ENCODE measurements at regions of chr3 and their contacts with region 1.

Region 1: DNA sequence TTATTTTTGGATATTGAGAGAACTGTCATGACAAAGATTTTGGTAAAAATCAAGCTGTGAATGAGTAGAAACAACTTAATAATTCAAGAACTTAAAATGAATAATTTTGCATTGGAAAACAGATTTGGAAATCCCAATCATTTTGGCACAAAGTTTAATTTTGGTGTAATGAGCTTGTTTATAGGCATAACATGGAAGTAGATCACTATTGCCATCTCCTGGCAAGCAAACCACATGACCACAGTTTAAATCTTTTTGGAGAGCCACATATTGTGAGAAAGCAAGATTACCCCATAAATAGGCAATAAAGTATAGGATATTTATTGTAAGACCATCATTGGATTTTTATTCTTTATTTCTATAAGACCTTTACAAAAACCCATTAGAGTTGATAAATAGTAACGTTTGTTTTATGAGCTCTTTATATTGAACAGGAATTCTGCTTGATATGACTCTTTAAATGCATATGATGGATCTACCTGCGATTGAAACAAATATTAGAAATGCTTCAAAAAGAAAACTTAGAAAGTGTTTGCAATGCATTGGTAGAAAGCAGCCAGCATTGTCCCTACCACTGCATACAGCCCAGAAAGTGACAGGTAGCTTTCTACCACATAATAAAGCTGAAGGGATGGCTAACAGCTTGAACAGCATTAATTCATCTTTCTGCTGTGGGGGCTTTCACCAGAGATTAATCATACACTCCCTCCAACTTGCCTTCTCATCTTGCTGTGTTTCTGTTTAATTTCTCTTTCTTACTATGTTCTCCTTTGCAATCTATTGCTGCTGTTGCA is 766.8 kb downstream of the TBL1XR1 start:
- DNase-seq: peak; percentile 24
- H3K4me3 Mint-ChIP-seq: no peak overlapping the region
- H3K27ac Mint-ChIP-seq: no peak overlapping the region
- H3K4me1 Mint-ChIP-seq: peaks cover 10% of the 10 kb centered on the region
- H3K27me3 Mint-ChIP-seq: no peaks in the 10 kb centered on the region
- CTCF ChIP-seq: peak; percentile 60

Region 2: GRCh38 chr3:174639961-174640360 is 1790.5 kb before region 1 on chr3:
- CTCF ChIA-PET with region 1: interaction called, 3 read pairs
- intact Hi-C with region 1: loop called (anchors 10 kb)
- DNase-seq: no peak
- H3K4me3 Mint-ChIP-seq: no peak overlapping the region
- H3K27ac Mint-ChIP-seq: no peak overlapping the region
- H3K4me1 Mint-ChIP-seq: no peaks in the 10 kb centered on the region
- H3K27me3 Mint-ChIP-seq: no peaks in the 10 kb centered on the region
- CTCF ChIP-seq: no peak

Region 3: GRCh38 chr3:174775587-174775986 is 1654.9 kb before region 1 on chr3:
- CTCF ChIA-PET with region 1: no interaction called
- intact Hi-C with region 1: loop called (anchors 2 kb)
- DNase-seq: peak; percentile 26
- H3K4me3 Mint-ChIP-seq: no peak overlapping the region
- H3K27ac Mint-ChIP-seq: no peak overlapping the region
- H3K4me1 Mint-ChIP-seq: peaks cover 21% of the 10 kb centered on the region
- H3K27me3 Mint-ChIP-seq: no peaks in the 10 kb centered on the region
- CTCF ChIP-seq: no peak

Region 4: GRCh38 chr3:174973468-174973867 is 1457.0 kb before region 1 on chr3:
- CTCF ChIA-PET with region 1: no interaction called
- intact Hi-C with region 1: loop called (anchors 10 kb)
- DNase-seq: peak; percentile 82
- H3K4me3 Mint-ChIP-seq: no peak overlapping the region
- H3K27ac Mint-ChIP-seq: peak overlapping the region; percentile 81
- H3K4me1 Mint-ChIP-seq: peaks cover 25% of the 10 kb centered on the region
- H3K27me3 Mint-ChIP-seq: no peaks in the 10 kb centered on the region
- CTCF ChIP-seq: no peak

Region 5: DNA sequence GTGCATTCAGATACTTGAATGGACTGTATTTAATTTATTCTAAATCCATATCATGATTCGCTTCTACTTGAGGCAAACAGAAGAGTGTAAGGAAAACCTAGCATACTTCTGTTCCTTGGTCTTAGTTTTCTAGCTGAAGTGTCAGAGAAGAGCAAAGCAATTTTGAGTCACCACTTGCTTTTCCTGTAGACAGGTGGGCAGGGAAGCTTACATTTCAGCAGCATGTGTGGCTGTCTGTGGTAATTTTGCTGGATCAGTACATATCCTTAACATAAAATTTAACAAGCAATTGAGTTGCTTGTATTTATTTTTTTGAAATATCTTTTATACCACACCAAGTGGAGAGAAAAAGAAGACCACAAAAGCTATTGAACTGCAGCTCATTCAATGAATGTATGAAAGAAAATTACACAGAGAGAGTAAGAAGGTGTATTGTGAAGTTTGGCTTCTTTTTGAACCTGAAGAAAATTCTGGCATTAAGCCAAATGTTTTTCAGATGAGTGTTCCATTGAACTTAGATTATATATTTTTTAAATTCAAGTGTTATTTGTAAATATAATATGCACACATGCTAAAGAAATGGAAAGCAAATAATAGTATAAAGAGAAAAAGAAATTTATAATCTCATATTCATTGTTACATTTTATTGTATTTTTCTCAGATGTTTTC is 823.7 kb before region 1 on chr3:
- CTCF ChIA-PET with region 1: no interaction called
- intact Hi-C with region 1: loop called (anchors 10 kb)
- DNase-seq: no peak
- H3K4me3 Mint-ChIP-seq: no peak overlapping the region
- H3K27ac Mint-ChIP-seq: peak overlapping the region; percentile 87
- H3K4me1 Mint-ChIP-seq: peaks cover 69% of the 10 kb centered on the region
- H3K27me3 Mint-ChIP-seq: no peaks in the 10 kb centered on the region
- CTCF ChIP-seq: no peak

Region 6: GRCh38 chr3:175957002-175957401 is 473.4 kb before region 1 on chr3:
- CTCF ChIA-PET with region 1: interaction called, 6 read pairs
- intact Hi-C with region 1: loop called (anchors 1 kb)
- DNase-seq: peak; percentile 14
- H3K4me3 Mint-ChIP-seq: no peak overlapping the region
- H3K27ac Mint-ChIP-seq: no peak overlapping the region
- H3K4me1 Mint-ChIP-seq: no peaks in the 10 kb centered on the region
- H3K27me3 Mint-ChIP-seq: no peaks in the 10 kb centered on the region
- CTCF ChIP-seq: peak; percentile 32

Measured in Calu3 (cell line).